Activated CD8-positive, alpha-beta T cell treated with anti-CD3 and anti-CD28 coated beads for 36 hours (primary cell): ENCODE measurements at regions of chrX and their contacts with region 1.

Region 1: GRCh38 chrX:71181910-71182799 is 37.5 kb downstream of the NLGN3 start:
- DNase-seq: peak; percentile 90
- ATAC-seq: peak; percentile 95
- H3K4me3 Mint-ChIP-seq: peak overlapping the region; percentile 92
- H3K27ac Mint-ChIP-seq: peak overlapping the region; percentile 99
- H3K4me1 Mint-ChIP-seq: peaks cover 16% of the 10 kb centered on the region
- H3K27me3 Mint-ChIP-seq: no peaks in the 10 kb centered on the region
- CTCF ChIP-seq: no peak

Region 2: DNA sequence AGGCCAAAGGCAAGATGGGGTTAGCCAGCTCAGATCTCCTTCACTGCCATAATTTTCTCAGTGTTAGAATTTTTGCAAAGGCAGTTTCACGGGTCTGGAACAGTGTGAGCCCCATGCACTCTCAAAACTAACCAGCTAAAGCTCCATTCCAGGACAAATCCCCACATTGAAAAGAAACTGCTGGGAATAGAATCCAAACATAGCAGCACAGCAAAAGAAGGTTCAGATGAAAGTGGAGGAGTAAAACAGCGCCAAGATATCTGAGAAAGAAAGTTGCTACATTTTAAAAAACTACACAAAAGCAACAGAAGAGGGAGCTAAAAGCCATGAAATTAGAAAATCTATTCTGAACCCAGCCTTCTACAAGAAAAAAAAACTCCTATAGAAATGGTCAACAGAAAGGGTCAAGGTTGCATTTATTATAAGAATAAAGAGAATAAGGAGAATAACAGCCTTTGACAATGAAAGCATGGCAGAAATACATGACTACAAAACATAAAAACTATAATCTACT is 211.6 kb before region 1 on chrX:
- CTCF ChIA-PET with region 1: interaction called, 17 read pairs
- POLR2A ChIA-PET with region 1: no interaction called
- intact Hi-C with region 1: loop called (anchors 10 kb)
- DNase-seq: no peak
- ATAC-seq: peak; percentile 27
- H3K4me3 Mint-ChIP-seq: peak overlapping the region; percentile 64
- H3K27ac Mint-ChIP-seq: no peak overlapping the region
- H3K4me1 Mint-ChIP-seq: peaks cover 10% of the 10 kb centered on the region
- H3K27me3 Mint-ChIP-seq: no peaks in the 10 kb centered on the region
- CTCF ChIP-seq: peak; percentile 40

Region 3: DNA sequence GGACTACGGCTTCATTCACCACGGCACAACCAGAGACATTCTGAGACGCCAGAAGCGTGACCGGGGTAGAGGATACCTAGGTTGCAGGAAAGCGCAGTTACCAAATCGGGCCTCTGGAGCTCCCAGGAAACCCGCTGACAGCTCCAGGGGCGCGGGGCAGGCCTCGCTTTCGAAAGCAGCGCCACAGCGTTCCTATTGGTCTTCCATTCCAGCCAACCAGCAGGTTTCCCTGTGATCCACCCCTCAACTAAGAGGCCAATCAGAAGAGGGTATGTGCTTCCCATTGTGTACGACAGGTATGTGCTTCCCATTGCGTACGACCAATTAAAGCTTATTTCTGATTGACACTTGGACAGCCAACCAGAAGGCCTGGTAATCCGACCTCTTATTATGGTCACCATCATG is 128.9 kb before region 1 on chrX:
- CTCF ChIA-PET with region 1: no interaction called
- POLR2A ChIA-PET with region 1: no interaction called
- intact Hi-C with region 1: no loop called
- DNase-seq: no peak
- ATAC-seq: no peak
- H3K4me3 Mint-ChIP-seq: no peak overlapping the region
- H3K27ac Mint-ChIP-seq: no peak overlapping the region
- H3K4me1 Mint-ChIP-seq: peaks cover 16% of the 10 kb centered on the region
- H3K27me3 Mint-ChIP-seq: no peaks in the 10 kb centered on the region
- CTCF ChIP-seq: no peak

Region 4: GRCh38 chrX:71095543-71095911 is 86.6 kb before region 1 on chrX and contains the start of gene FOXO4:
- CTCF ChIA-PET with region 1: interaction called, 7 read pairs
- POLR2A ChIA-PET with region 1: interaction called, 3 read pairs
- intact Hi-C with region 1: loop called (anchors 5 kb)
- DNase-seq: peak; percentile 93
- ATAC-seq: peak; percentile 89
- H3K4me3 Mint-ChIP-seq: peak within 1 kb of the TSS; percentile 85
- H3K27ac Mint-ChIP-seq: peak within 1 kb of the TSS; percentile 87
- H3K4me1 Mint-ChIP-seq: peaks cover 28% of the 10 kb centered on the region
- H3K27me3 Mint-ChIP-seq: no peaks in the 10 kb centered on the region
- CTCF ChIP-seq: no peak
- total RNA-seq, gene FOXO4: 6.0 to 8.7 TPM